ENCODE measurements at regions of chr12 and their contacts with region 1.

Region 1: DNA sequence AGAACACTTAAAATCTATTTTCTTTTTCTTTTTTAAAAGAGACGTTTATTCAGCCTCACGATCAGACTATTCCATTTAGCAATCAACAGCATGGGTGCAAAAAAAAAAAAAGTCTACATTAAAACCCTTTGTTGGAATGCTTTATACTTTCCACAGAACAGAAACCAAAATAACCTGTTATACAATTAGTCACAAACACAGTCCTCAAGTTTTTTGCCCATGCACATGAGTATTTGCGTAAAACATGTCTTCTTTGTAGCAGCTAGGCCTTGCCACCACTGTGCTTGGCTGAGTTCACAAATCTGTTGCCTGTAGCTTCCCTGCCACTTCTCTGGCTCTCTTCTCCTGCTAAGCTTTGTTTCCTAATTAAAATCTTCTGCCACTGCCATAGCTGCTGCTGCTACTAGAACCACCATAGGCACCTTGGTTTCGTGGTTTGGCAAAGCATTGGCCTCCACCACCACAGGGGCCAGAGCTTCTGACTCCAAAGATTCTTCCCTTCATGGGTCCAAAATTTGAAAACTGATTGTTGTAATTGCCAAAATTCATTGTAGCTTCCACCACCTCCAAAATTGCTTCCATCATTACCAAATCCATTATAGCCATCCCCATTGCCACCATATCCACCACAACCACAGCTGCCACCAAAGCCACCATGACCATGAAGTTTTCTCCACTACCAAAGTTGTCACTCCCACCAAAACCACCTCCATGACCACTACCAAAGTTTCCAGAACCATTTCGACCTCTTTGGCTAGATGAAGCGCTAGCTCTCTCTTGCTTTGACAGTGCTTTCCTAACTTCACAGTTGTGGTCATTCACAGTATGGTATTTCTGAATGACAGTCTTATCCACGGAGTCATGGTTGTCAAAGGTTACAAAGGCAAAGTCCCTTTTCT is 38.1 kb downstream of the KLRG1 start:
- DNase-seq: no peak
- H3K4me3 ChIP-seq: no peak overlapping the region
- H3K27ac ChIP-seq: no peak overlapping the region
- H3K4me1 ChIP-seq: no peaks in the 10 kb centered on the region
- H3K27me3 ChIP-seq: no peaks in the 10 kb centered on the region
- CTCF ChIP-seq: no peak
- EP300 ChIP-seq: no peak
- POLR2A ChIP-seq: no peak
- RAD21 ChIP-seq: no peak

Region 2: GRCh38 chr12:9039397-9039977 is 12.1 kb after region 1 on chr12:
- CTCF ChIA-PET with region 1: interaction called, 13 read pairs
- POLR2A ChIA-PET with region 1: no interaction called
- DNase-seq: no peak
- H3K4me3 ChIP-seq: no peak overlapping the region
- H3K27ac ChIP-seq: no peak overlapping the region
- H3K4me1 ChIP-seq: no peaks in the 10 kb centered on the region
- H3K27me3 ChIP-seq: no peaks in the 10 kb centered on the region
- CTCF ChIP-seq: peak in 2 of 3 experiments; percentile 52 to 74; a peak in 2 of 4 replicates
- EP300 ChIP-seq: no peak
- POLR2A ChIP-seq: no peak
- RAD21 ChIP-seq: peak; percentile 79

Measured in H1 (cell line).